CD4-positive, alpha-beta T cell (primary cell): ENCODE measurements at regions of chr1 and their contacts with region 1.

Region 1: DNA sequence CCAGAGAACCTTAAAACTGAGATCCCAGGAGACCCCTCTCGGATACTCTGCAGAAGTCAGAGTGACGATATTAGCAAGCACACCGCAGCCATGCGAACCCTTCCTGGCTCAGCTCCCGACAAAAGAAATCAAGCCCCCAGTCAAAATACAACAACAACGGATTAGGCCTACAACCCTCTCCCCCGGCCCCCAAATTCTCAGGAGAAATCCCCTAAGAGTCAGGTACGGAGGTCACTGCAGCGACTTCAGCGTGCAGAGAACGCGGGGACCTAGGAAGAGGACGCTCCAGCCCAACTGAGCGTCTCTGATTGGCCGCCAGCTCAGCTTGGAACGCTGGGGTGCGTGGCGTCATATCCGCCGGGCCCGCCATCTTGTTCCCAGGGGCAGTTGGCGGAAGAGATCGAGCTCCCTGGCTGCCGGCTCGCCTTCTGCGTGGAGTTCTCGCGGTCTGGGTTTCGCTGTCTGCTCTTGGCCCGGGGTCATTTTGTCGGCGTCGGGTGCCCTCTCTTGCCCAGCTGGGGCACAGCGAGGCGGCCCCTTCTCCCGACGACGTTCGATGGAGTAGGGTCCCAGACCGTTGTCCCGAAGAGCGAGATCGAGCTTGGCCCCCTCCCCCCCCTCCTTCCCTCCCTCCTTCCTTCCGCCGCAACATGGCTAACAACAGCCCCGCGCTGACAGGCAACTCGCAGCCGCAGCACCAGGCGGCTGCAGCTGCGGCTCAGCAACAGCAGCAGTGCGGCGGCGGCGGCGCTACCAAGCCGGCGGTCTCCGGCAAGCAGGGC is at the start of gene PRPF38B:
- DNase-seq: peak; percentile 88 to 97 (median 91)
- ATAC-seq: peak; percentile 84
- H3K4me3 ChIP-seq: peak within 1 kb of the TSS; percentile 89
- H3K4me3 Mint-ChIP-seq: peak within 1 kb of the TSS; percentile 95
- H3K27ac ChIP-seq: peak within 1 kb of the TSS; percentile 99
- H3K27ac Mint-ChIP-seq: peak within 1 kb of the TSS; percentile 97
- H3K4me1 ChIP-seq: peaks cover 24% of the 10 kb centered on the region
- H3K4me1 Mint-ChIP-seq: peaks cover 51% of the 10 kb centered on the region
- H3K27me3 ChIP-seq: no peaks in the 10 kb centered on the region
- H3K27me3 Mint-ChIP-seq: no peaks in the 10 kb centered on the region
- CTCF ChIP-seq: no peak
- total RNA-seq, gene PRPF38B: 114 to 120 TPM

Region 2: DNA sequence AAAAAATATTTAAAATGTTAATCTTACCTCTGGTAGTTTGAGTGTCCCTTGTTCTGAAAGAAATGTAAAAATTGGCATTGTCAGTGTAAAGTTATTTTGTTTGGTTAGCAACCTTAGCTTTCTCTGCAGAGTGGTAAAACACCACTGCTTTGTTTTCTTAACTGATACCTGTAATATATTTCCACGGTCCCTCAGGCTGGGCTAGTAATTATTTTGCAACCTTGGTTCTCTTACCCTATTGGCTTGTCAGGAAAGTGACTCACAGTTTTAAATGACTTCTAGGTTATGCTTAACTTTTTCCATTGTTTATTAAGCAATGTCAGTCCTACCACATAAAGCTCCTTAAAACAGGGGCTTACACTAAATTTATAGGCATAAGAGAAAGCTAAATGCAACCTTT is 1003.8 kb before region 1 on chr1:
- CTCF ChIA-PET with region 1: no interaction called
- POLR2A ChIA-PET with region 1: no interaction called
- intact Hi-C with region 1: no loop called
- DNase-seq: no peak
- ATAC-seq: no peak
- H3K4me3 ChIP-seq: no peak overlapping the region
- H3K4me3 Mint-ChIP-seq: no peak overlapping the region
- H3K27ac ChIP-seq: no peak overlapping the region
- H3K27ac Mint-ChIP-seq: no peak overlapping the region
- H3K4me1 ChIP-seq: no peaks in the 10 kb centered on the region
- H3K4me1 Mint-ChIP-seq: no peaks in the 10 kb centered on the region
- H3K27me3 ChIP-seq: no peaks in the 10 kb centered on the region
- H3K27me3 Mint-ChIP-seq: no peaks in the 10 kb centered on the region
- CTCF ChIP-seq: no peak

Region 3: DNA sequence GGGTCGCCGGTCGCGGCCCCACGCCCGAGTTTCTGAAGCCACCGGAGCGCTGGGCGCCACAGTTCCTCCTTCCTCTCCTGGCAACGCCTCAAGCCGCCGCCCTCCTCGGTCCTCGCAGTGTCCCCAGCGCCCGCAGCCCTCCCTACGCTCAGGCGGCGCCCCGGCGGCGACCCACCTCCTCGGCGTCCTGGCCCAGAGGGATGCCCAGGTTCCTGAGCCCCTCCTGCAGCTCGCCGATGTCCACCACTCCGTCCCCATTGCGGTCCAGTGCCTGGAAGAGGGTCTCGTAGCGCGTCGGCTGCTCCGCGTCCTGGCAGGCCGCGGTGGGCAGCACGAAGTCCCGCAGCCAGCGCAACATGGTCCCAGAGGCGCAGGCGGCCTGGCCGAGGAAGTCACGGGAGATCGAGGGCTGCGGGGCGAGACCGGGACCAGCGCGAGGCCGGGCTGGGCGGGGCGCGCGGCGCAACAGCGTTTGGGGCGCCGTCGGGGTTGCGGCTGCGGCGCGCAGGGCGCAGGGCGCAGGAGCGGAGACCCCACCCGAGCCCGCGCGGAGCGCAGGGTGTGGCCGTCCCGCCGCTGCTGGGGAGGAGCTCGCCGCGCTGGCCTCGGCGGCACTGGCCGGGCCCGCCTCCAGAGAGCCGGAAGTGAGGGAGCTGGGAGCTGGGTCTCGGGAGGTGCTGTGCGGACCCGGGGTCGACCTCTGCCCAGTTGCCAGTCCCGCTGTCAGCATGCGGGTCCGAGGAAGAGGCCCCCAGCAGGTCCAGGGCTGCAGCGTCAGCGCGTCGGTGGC is 492.2 kb before region 1 on chr1 and contains the start of gene SLC25A24:
- CTCF ChIA-PET with region 1: interaction called, 3 read pairs
- POLR2A ChIA-PET with region 1: interaction called, 18 read pairs
- intact Hi-C with region 1: no loop called
- DNase-seq: peak; percentile 51 to 89 (median 69)
- ATAC-seq: peak; percentile 92
- H3K4me3 ChIP-seq: peak within 1 kb of the TSS; percentile 97
- H3K4me3 Mint-ChIP-seq: peak within 1 kb of the TSS; percentile 94
- H3K27ac ChIP-seq: peak within 1 kb of the TSS; percentile 42 to 79
- H3K27ac Mint-ChIP-seq: peak within 1 kb of the TSS; percentile 83
- H3K4me1 ChIP-seq: peaks cover 16% of the 10 kb centered on the region
- H3K4me1 Mint-ChIP-seq: peaks cover 34% of the 10 kb centered on the region
- H3K27me3 ChIP-seq: no peaks in the 10 kb centered on the region
- H3K27me3 Mint-ChIP-seq: no peaks in the 10 kb centered on the region
- CTCF ChIP-seq: no peak
- total RNA-seq, gene SLC25A24: 4.9 to 5.5 TPM

Region 4: DNA sequence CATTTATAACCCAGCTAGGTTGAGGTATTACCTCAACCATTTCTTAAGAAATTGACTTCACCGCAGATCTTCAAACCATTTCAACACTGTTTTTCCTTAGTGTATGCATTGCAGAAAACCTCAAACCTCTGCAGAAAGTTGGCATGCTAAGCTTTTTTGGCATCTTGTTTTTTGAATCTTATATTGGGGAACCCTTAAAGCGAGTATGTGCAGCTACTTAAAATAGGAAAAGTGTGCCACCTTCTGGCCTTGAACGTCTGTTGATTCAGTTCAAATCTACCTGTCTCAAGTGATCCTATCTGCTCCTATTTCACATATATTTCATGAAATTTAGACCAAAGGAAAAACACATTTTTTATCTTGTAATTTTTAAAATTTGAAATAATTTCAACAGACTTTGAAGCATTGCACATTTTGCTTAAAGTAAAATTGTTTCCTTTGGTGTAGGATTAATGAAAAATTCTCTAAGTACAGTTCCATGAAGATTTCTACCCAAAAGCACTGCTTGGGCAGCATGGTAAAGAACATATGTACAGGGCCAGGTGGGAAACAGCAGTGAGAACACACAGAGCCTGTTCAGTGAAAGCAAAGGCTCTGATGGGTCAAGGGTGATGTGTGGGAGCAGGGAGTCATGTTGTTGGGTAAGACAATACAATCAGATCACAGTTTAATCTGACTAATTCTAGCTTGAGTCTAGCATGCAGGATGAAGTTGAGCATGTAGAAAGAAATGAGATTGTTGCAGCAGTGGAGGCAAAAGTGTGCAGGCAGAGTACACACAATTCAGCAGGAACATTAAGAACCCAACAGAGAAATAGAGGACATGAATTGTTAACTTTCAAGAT is 48.4 kb before region 1 on chr1:
- CTCF ChIA-PET with region 1: interaction called, 16 read pairs
- POLR2A ChIA-PET with region 1: interaction called, 481 read pairs
- intact Hi-C with region 1: loop called (anchors 1 to 2 kb)
- DNase-seq: peak in 10 of 14 experiments; percentile 32 to 86 (median 48)
- ATAC-seq: peak; percentile 24
- H3K4me3 ChIP-seq: no peak overlapping the region
- H3K4me3 Mint-ChIP-seq: peak overlapping the region; percentile 25
- H3K27ac ChIP-seq: peak overlapping the region; percentile 18 to 74
- H3K27ac Mint-ChIP-seq: peak overlapping the region; percentile 96
- H3K4me1 ChIP-seq: peaks cover 61% of the 10 kb centered on the region
- H3K4me1 Mint-ChIP-seq: peaks cover 80% of the 10 kb centered on the region
- H3K27me3 ChIP-seq: no peaks in the 10 kb centered on the region
- H3K27me3 Mint-ChIP-seq: no peaks in the 10 kb centered on the region
- CTCF ChIP-seq: peak; percentile 77

Region 5: DNA sequence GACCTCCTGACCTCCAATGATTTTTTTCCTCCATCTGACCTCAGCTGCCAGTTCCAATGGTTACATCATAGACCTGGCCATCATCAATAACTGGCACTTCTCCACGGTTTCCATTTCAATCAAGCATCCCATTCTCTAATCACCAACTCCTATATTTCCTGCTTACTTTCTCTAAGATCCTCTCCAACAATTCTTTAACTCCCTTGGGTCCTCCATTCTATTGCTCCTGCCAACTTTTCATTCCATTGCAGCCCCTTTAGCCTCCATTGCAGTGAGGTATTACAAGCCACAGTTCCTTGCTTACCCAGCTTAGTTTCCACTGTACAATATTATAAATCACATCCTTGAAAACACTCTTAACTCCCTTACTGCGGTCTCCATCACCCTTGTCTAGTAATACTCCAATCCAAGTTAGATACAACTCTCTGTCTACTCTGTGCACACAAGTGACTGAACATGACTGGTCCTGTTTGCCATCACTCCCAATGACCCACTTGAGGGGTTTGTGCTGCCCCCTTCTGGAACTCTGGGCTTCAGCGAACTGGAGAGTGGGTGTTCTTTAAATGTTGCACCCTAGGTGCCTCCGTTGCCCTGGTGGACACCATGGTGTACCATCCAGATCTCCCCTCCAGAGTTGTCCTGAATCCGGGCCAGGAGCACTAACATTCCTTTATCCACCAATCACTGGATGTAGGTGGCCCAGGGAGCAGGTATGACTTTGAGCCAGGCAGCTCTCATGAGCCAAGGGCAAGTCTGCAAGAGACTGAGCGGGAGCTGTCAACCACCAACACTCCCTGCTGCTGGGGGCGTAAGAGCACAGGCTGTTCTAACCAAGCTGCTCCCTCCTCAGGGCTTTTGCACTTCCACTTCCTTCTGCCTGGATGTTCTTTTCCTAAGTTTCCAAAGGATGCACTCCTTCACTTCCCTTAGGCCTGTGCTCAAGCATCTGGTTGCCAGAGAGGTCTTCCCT is 16.8 kb after region 1 on chr1:
- CTCF ChIA-PET with region 1: interaction called, 15 read pairs
- POLR2A ChIA-PET with region 1: interaction called, 160 read pairs
- intact Hi-C with region 1: loop called (anchors 2 kb)
- DNase-seq: peak; percentile 41 to 83 (median 61)
- ATAC-seq: peak; percentile 79
- H3K4me3 ChIP-seq: no peak overlapping the region
- H3K4me3 Mint-ChIP-seq: no peak overlapping the region
- H3K27ac ChIP-seq: no peak overlapping the region
- H3K27ac Mint-ChIP-seq: no peak overlapping the region
- H3K4me1 ChIP-seq: peaks cover 28% of the 10 kb centered on the region
- H3K4me1 Mint-ChIP-seq: peaks cover 29% of the 10 kb centered on the region
- H3K27me3 ChIP-seq: no peaks in the 10 kb centered on the region
- H3K27me3 Mint-ChIP-seq: no peaks in the 10 kb centered on the region
- CTCF ChIP-seq: peak; percentile 49

Region 6: GRCh38 chr1:108828022-108828961 is 136.2 kb after region 1 on chr1:
- CTCF ChIA-PET with region 1: interaction called, 6 read pairs
- POLR2A ChIA-PET with region 1: interaction called, 4 read pairs
- intact Hi-C with region 1: loop called (anchors 2 to 5 kb)
- DNase-seq: peak; percentile 46 to 83 (median 60)
- ATAC-seq: peak; percentile 68
- H3K4me3 ChIP-seq: no peak overlapping the region
- H3K4me3 Mint-ChIP-seq: no peak overlapping the region
- H3K27ac ChIP-seq: no peak overlapping the region
- H3K27ac Mint-ChIP-seq: no peak overlapping the region
- H3K4me1 ChIP-seq: peaks cover 4% of the 10 kb centered on the region
- H3K4me1 Mint-ChIP-seq: no peaks in the 10 kb centered on the region
- H3K27me3 ChIP-seq: no peaks in the 10 kb centered on the region
- H3K27me3 Mint-ChIP-seq: no peaks in the 10 kb centered on the region
- CTCF ChIP-seq: peak; percentile 78

Region 7: GRCh38 chr1:108963052-108963686 is 271.0 kb after region 1 on chr1 and contains the start of gene CLCC1:
- CTCF ChIA-PET with region 1: no interaction called
- POLR2A ChIA-PET with region 1: interaction called, 10 read pairs
- intact Hi-C with region 1: no loop called
- DNase-seq: peak; percentile 80 to 97 (median 88)
- ATAC-seq: peak; percentile 93
- H3K4me3 ChIP-seq: peak within 1 kb of the TSS; percentile 59
- H3K4me3 Mint-ChIP-seq: peak within 1 kb of the TSS; percentile 94
- H3K27ac ChIP-seq: peak within 1 kb of the TSS; percentile 64 to 79
- H3K27ac Mint-ChIP-seq: peak within 1 kb of the TSS; percentile 93
- H3K4me1 ChIP-seq: peaks cover 31% of the 10 kb centered on the region
- H3K4me1 Mint-ChIP-seq: peaks cover 47% of the 10 kb centered on the region
- H3K27me3 ChIP-seq: no peaks in the 10 kb centered on the region
- H3K27me3 Mint-ChIP-seq: no peaks in the 10 kb centered on the region
- CTCF ChIP-seq: no peak
- total RNA-seq, gene CLCC1: 8.6 to 9.1 TPM

Region 8: DNA sequence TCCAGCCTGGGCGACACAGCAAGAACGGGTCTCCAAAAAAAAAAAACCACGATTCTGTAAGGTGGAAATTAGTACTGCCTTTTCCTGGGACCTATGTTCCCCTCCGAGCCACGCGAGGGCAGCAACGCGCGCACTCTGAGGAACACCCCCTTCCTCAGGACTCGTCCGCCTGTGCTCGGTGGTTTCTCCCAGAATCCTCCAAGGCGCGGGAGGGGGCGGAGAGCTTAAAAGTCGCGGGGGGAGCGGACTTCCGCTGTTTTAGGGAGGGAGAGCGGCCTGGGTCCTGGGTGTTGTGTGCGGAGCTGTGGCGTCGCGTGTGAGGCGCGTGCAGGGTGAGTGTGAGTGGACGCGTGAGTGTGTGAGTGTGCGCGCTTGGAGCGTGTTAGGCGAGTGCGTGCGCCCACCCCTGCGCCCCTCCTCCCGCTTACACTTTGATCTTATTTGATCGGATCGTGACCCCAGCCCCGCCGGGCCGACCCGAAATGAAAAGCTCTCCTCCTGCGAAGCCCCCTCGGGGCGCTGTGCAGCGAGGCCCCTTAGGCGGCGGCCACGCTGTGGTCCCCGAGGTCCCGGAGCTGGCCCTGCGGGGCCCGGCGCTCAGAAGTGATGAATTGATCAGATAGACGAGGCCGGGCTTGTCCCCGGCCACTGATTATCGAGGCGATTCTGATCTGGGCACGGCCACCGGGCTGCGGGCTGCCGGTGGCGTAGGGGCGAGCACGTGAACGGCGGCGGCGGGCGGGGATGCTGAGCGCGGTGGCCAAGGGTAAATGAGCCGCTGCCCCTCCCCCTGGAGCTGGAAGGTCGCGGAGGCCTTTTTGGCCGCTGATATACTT is 408.0 kb after region 1 on chr1:
- CTCF ChIA-PET with region 1: interaction called, 4 read pairs
- POLR2A ChIA-PET with region 1: interaction called, 38 read pairs
- intact Hi-C with region 1: no loop called
- DNase-seq: peak; percentile 96 to 98 (median 97)
- ATAC-seq: peak; percentile 93
- H3K4me3 ChIP-seq: peak overlapping the region; percentile 94
- H3K4me3 Mint-ChIP-seq: peak overlapping the region; percentile 95
- H3K27ac ChIP-seq: peak overlapping the region; percentile 86 to 89
- H3K27ac Mint-ChIP-seq: peak overlapping the region; percentile 92
- H3K4me1 ChIP-seq: peaks cover 22% of the 10 kb centered on the region
- H3K4me1 Mint-ChIP-seq: peaks cover 12% of the 10 kb centered on the region
- H3K27me3 ChIP-seq: no peaks in the 10 kb centered on the region
- H3K27me3 Mint-ChIP-seq: no peaks in the 10 kb centered on the region
- CTCF ChIP-seq: peak; percentile 87